ENCODE measurements at regions of chr6 and their contacts with region 1.

Region 1: GRCh38 chr6:121984956-121985355 is 414.5 kb upstream of the HSF2 start:
- DNase-seq: no peak
- ATAC-seq: no peak
- H3K4me3 ChIP-seq: no peak overlapping the region
- H3K27ac ChIP-seq: no peak overlapping the region
- H3K4me1 ChIP-seq: no peaks in the 10 kb centered on the region
- H3K27me3 ChIP-seq: no peaks in the 10 kb centered on the region
- CTCF ChIP-seq: no peak
- POLR2A ChIP-seq: no peak
- RAD21 ChIP-seq: no peak

Region 2: GRCh38 chr6:121951918-121952379 is 33.0 kb before region 1 on chr6:
- CTCF ChIA-PET with region 1: no interaction called
- POLR2A ChIA-PET with region 1: no interaction called
- RAD21 ChIA-PET with region 1: no interaction called
- intact Hi-C with region 1: no loop called
- DNase-seq: no peak
- ATAC-seq: no peak
- H3K4me3 ChIP-seq: no peak overlapping the region
- H3K27ac ChIP-seq: no peak overlapping the region
- H3K4me1 ChIP-seq: no peaks in the 10 kb centered on the region
- H3K27me3 ChIP-seq: no peaks in the 10 kb centered on the region
- CTCF ChIP-seq: no peak
- POLR2A ChIP-seq: no peak
- RAD21 ChIP-seq: no peak

Region 3: DNA sequence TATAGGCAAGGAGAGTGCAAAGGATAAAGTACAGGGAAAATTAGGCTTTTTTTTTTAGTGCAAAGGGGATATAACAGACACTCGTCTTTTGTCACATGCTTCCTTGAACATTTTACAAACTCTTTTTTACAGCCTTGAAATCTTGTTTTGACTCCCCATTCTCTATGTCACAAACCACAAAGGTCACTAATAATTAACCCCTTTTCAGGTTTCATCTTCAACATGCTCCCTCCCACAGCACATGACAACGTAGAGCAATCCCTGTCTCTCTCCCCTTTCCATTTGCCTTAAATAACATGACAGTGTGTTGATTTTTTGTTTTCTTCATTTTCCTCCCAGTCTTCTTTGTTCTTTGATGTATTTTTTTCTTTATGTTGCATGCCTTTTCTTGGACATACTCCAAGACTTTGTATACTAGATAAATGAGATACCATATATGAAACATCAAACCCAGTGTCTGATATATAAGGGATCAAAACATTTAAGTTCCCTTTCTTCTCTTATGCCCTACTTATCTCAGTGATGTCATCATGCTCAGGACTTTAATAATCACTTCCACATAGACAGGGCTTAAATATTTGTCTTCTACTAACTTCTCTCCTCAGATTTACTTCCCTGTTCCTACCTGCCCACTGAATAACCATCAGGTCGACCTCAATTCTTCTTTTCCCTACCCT is 35.8 kb after region 1 on chr6:
- CTCF ChIA-PET with region 1: no interaction called
- POLR2A ChIA-PET with region 1: no interaction called
- RAD21 ChIA-PET with region 1: no interaction called
- intact Hi-C with region 1: loop called (anchors 1 kb)
- DNase-seq: no peak
- ATAC-seq: no peak
- H3K4me3 ChIP-seq: no peak overlapping the region
- H3K27ac ChIP-seq: no peak overlapping the region
- H3K4me1 ChIP-seq: no peaks in the 10 kb centered on the region
- H3K27me3 ChIP-seq: no peaks in the 10 kb centered on the region
- CTCF ChIP-seq: no peak
- POLR2A ChIP-seq: no peak
- RAD21 ChIP-seq: no peak

Measured in HCT116 (cell line).